HCT116 (cell line): ENCODE measurements at regions of chr15 and their contacts with region 1.

Region 1: GRCh38 chr15:77543159-77543882 is 89.4 kb downstream of the LINGO1 start:
- DNase-seq: peak; percentile 78
- ATAC-seq: peak; percentile 91
- H3K4me3 ChIP-seq: peak overlapping the region; percentile 73 to 76
- H3K27ac ChIP-seq: peak overlapping the region; percentile 41
- H3K4me1 ChIP-seq: peaks cover 0 to 35% of the 10 kb centered on the region in 2 experiments; a peak in 3 of 4 replicates
- H3K27me3 ChIP-seq: no peaks in the 10 kb centered on the region
- CTCF ChIP-seq: peak; percentile 94 to 99 (median 99)
- POLR2A ChIP-seq: peak; percentile 66
- RAD21 ChIP-seq: peak; percentile 90

Region 2: DNA sequence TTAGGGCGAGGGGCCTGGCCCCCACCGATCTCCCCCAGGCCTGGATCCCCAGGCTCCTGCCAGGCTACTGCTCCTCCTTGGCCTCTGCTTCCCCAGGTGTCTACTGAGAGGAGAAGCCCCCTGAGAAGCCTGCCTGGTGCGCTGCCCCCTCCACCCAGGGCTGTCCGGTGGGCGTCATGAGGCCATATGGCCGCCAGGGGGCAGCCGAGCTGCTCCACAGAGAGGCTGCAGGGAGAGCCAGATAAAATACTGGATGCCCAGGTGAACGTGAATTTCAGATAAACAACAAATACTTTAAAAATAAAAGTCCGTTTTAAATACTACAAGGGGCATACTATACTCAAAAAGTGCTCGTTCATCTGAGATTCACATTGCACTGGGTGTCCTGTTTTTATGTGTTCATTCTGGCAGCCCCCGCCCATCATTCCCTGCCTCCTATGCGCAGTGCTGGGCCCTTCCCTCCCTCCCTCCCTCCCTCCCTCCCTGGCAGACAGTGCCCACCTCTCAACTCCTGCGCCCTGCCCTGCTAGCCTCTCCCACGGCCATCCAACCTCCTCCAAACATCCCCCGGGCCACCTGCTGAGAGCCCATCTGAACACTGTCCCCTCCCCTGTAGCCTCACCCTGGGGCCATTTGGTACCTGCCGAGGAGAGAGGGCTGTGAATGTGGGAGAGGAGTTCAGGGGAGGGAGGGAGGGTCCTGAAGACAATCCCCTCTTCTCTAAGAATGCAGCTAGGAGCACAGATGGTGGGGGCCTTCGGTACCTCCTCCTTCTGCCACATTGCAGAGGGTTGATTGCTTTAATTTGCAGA is 518.8 kb before region 1 on chr15:
- CTCF ChIA-PET with region 1: interaction called, 21 read pairs
- POLR2A ChIA-PET with region 1: no interaction called
- RAD21 ChIA-PET with region 1: no interaction called
- intact Hi-C with region 1: loop called (anchors 2 kb)
- DNase-seq: no peak
- ATAC-seq: peak; percentile 87
- H3K4me3 ChIP-seq: no peak overlapping the region
- H3K27ac ChIP-seq: no peak overlapping the region
- H3K4me1 ChIP-seq: peaks cover 0 to 2% of the 10 kb centered on the region in 2 experiments; a peak in 1 of 4 replicates
- H3K27me3 ChIP-seq: no peaks in the 10 kb centered on the region
- CTCF ChIP-seq: peak; percentile 65 to 98 (median 94); a peak in 5 of 6 replicates
- POLR2A ChIP-seq: no peak
- RAD21 ChIP-seq: peak; percentile 75

Region 3: GRCh38 chr15:77107531-77108355 is 435.6 kb before region 1 on chr15:
- CTCF ChIA-PET with region 1: interaction called, 19 read pairs
- POLR2A ChIA-PET with region 1: interaction called, 6 read pairs
- RAD21 ChIA-PET with region 1: interaction called, 9 read pairs
- intact Hi-C with region 1: loop called (anchors 1 kb)
- DNase-seq: no peak
- ATAC-seq: peak; percentile 95
- H3K4me3 ChIP-seq: no peak overlapping the region
- H3K27ac ChIP-seq: no peak overlapping the region
- H3K4me1 ChIP-seq: no peaks in the 10 kb centered on the region; a peak in 1 of 4 replicates
- H3K27me3 ChIP-seq: no peaks in the 10 kb centered on the region
- CTCF ChIP-seq: peak; percentile 66 to 80 (median 75); a peak in 5 of 6 replicates
- POLR2A ChIP-seq: no peak
- RAD21 ChIP-seq: peak; percentile 77

Region 4: DNA sequence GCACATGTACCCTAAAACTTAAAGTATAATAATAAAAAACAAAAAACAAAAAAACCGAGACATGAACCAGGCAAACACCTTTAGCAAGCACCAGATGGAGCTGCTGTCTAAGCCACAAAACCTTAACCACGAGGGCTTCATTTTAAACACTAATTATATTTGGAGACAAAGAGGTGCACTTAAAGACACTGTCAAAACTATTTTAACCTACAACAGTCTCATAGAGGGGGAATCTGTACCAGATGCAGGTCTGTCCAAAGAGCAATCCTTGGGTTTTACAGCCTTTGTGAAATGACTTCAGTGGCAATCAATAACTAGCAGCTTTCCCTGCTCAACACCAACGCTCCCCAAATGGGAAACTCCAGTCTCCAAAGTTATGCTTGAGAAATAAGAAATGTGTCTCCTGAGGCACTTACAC is 356.7 kb before region 1 on chr15:
- CTCF ChIA-PET with region 1: interaction called, 61 read pairs
- POLR2A ChIA-PET with region 1: interaction called, 4 read pairs
- RAD21 ChIA-PET with region 1: interaction called, 8 to 9 read pairs
- intact Hi-C with region 1: loop called (anchors 1 kb)
- DNase-seq: peak; percentile 10
- ATAC-seq: 0 out of 2 replicates have a peak, but pooled peaks have one; percentile 30
- H3K4me3 ChIP-seq: no peak overlapping the region
- H3K27ac ChIP-seq: no peak overlapping the region
- H3K4me1 ChIP-seq: no peaks in the 10 kb centered on the region
- H3K27me3 ChIP-seq: no peaks in the 10 kb centered on the region
- CTCF ChIP-seq: peak; percentile 44 to 64 (median 47); a peak in 4 of 6 replicates
- POLR2A ChIP-seq: no peak
- RAD21 ChIP-seq: peak; percentile 75

Region 5: DNA sequence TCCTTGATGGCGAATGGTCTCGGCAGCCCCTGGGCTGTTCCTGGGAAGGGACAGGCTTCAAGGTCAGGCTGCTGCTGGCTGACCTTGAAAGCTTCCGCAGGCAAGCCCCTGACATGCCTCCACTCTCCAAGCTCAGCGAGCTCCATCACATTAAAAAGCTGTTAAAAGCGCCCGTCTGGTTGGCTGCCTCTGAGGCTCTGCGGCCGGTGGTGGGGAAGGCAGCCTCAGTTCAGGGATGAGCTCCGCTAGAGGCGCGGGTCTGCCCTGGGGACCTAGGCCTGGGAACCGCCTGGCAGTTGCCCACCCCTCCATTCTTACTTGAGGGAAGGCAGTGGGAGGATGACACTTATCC is 14.4 kb before region 1 on chr15:
- CTCF ChIA-PET with region 1: interaction called, 12 read pairs
- POLR2A ChIA-PET with region 1: interaction called, 3 read pairs
- RAD21 ChIA-PET with region 1: no interaction called
- intact Hi-C with region 1: no loop called
- DNase-seq: no peak
- ATAC-seq: no peak
- H3K4me3 ChIP-seq: no peak overlapping the region
- H3K27ac ChIP-seq: no peak overlapping the region
- H3K4me1 ChIP-seq: peaks cover 8 to 9% of the 10 kb centered on the region in 2 experiments; a peak in 3 of 4 replicates
- H3K27me3 ChIP-seq: peaks cover 4% of the 10 kb centered on the region; the same call in 1 of the 2 replicates
- CTCF ChIP-seq: no peak
- POLR2A ChIP-seq: no peak
- RAD21 ChIP-seq: no peak

Region 6: GRCh38 chr15:77617476-77618230 is 74.3 kb after region 1 on chr15:
- CTCF ChIA-PET with region 1: interaction called, 11 read pairs
- POLR2A ChIA-PET with region 1: no interaction called
- RAD21 ChIA-PET with region 1: no interaction called
- intact Hi-C with region 1: no loop called
- DNase-seq: peak; percentile 13
- ATAC-seq: peak; percentile 89
- H3K4me3 ChIP-seq: no peak overlapping the region
- H3K27ac ChIP-seq: no peak overlapping the region
- H3K4me1 ChIP-seq: peaks cover 0 to 3% of the 10 kb centered on the region in 2 experiments; a peak in 2 of 4 replicates
- H3K27me3 ChIP-seq: no peaks in the 10 kb centered on the region
- CTCF ChIP-seq: peak; percentile 42 to 82 (median 79); a peak in 5 of 6 replicates
- POLR2A ChIP-seq: no peak
- RAD21 ChIP-seq: peak; percentile 30

Region 7: GRCh38 chr15:77821188-77821958 is 278.1 kb after region 1 on chr15:
- CTCF ChIA-PET with region 1: interaction called, 21 read pairs
- POLR2A ChIA-PET with region 1: no interaction called
- RAD21 ChIA-PET with region 1: no interaction called
- intact Hi-C with region 1: loop called (anchors 2 kb)
- DNase-seq: peak; percentile 37
- ATAC-seq: peak; percentile 73
- H3K4me3 ChIP-seq: no peak overlapping the region
- H3K27ac ChIP-seq: no peak overlapping the region
- H3K4me1 ChIP-seq: peaks cover 0 to 12% of the 10 kb centered on the region in 2 experiments; a peak in 2 of 4 replicates
- H3K27me3 ChIP-seq: no peaks in the 10 kb centered on the region; the same call in 1 of the 2 replicates
- CTCF ChIP-seq: peak; percentile 87 to 93 (median 90)
- POLR2A ChIP-seq: no peak
- RAD21 ChIP-seq: peak; percentile 87

Region 8: GRCh38 chr15:78204351-78205309 is 661.3 kb after region 1 on chr15:
- CTCF ChIA-PET with region 1: no interaction called
- POLR2A ChIA-PET with region 1: no interaction called
- RAD21 ChIA-PET with region 1: no interaction called
- intact Hi-C with region 1: no loop called
- DNase-seq: no peak
- ATAC-seq: no peak
- H3K4me3 ChIP-seq: no peak overlapping the region
- H3K27ac ChIP-seq: no peak overlapping the region
- H3K4me1 ChIP-seq: peaks cover 3 to 18% of the 10 kb centered on the region in 2 experiments
- H3K27me3 ChIP-seq: no peaks in the 10 kb centered on the region
- CTCF ChIP-seq: no peak
- POLR2A ChIP-seq: no peak
- RAD21 ChIP-seq: no peak